Dendritic cell treated with granulocyte-macrophage colony-stimulating factor and Interleukin-4, amounts not matched to agents 40 ng/mL and 50 ng/mL, for 4 days (primary cell): ENCODE measurements at regions of chr12 and their contacts with region 1.

Region 1: GRCh38 chr12:98606357-98606988 is 13.0 kb downstream of the SLC25A3 start:
- H3K4me3 Mint-ChIP-seq: peak overlapping the region; percentile 76
- H3K27ac Mint-ChIP-seq: peak overlapping the region; percentile 94
- H3K4me1 Mint-ChIP-seq: peaks cover 10% of the 10 kb centered on the region
- H3K27me3 Mint-ChIP-seq: no peaks in the 10 kb centered on the region

Region 2: GRCh38 chr12:98352218-98352811 is 254.2 kb before region 1 on chr12:
- intact Hi-C with region 1: no loop called
- H3K4me3 Mint-ChIP-seq: no peak overlapping the region
- H3K27ac Mint-ChIP-seq: no peak overlapping the region
- H3K4me1 Mint-ChIP-seq: no peaks in the 10 kb centered on the region
- H3K27me3 Mint-ChIP-seq: no peaks in the 10 kb centered on the region

Region 3: DNA sequence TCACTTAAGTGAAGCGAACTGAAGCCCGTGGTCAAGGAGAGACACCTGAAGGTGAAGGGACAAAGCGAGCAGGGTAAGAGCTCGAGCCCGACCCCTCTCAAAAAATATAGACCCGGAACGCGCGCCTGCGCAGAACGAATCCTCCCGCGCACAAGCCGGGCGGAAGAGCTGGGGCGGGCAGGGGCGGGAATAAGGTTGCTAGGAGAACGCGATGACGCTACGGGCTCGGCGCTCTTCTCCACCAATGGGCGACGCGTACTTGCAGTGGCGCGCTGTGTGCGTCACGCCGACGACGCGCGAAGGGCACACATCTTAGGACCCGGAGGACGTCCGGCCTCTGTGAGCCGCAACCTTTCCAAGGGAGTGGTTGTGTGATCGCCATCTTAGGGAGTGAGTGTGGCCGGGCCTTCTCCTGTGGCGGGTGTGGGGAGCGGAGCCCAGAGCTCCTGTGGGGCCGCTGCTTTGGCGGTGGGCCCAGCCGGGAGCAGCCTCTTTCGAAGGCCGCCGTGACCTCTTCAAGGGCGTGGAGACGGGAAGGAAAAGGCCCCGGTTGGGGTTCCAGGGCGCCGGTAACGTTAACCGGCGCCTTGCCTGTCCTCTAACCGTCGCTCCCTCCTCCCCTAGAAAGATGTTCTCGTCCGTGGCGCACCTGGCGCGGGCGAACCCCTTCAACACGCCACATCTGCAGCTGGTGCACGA is 13.0 kb before region 1 on chr12 and contains the start of gene SLC25A3:
- intact Hi-C with region 1: loop called (anchors 1 kb)
- H3K4me3 Mint-ChIP-seq: peak within 1 kb of the TSS; percentile 95
- H3K27ac Mint-ChIP-seq: peak within 1 kb of the TSS; percentile 92
- H3K4me1 Mint-ChIP-seq: peaks cover 23% of the 10 kb centered on the region
- H3K27me3 Mint-ChIP-seq: no peaks in the 10 kb centered on the region

Region 4: DNA sequence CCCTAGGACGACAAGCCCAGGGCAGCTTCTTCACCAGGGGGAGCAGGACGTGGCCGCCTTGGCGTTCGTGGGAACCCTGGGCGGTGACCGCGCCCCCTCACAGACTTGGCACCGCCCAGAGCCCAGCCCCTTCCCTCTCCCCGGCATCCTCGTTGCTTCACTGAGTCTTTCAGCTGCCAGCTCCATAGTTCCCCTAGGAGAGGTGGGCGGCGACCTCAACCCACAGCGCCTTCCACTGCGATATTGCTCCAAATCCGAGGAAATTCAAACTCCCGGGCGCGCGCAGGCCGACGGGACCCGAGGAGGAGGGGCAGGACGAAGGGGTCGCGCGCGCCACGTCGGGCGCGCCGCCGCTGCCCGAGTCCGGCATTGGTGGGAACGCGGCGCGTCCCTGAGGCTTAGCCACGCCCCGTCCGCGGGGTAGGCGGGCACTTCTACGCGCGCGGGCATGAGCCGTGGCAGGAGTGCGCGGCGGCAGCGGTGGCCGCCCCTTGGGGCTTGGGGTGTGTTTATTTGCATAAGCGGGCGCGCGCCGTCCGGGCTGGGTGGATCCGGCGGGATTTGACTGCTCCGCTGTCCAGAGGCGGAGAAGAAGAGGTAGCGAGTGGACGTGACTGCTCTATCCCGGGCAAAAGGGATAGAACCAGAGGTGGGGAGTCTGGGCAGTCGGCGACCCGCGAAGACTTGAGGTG is 38.4 kb after region 1 on chr12 and contains the starts of genes APAF1 and IKBIP:
- intact Hi-C with region 1: loop called (anchors 2 kb)
- H3K4me3 Mint-ChIP-seq: peak within 1 kb of the TSS; percentile 88
- H3K27ac Mint-ChIP-seq: peak within 1 kb of the TSS; percentile 90
- H3K4me1 Mint-ChIP-seq: peaks cover 30% of the 10 kb centered on the region
- H3K27me3 Mint-ChIP-seq: no peaks in the 10 kb centered on the region

Region 5: DNA sequence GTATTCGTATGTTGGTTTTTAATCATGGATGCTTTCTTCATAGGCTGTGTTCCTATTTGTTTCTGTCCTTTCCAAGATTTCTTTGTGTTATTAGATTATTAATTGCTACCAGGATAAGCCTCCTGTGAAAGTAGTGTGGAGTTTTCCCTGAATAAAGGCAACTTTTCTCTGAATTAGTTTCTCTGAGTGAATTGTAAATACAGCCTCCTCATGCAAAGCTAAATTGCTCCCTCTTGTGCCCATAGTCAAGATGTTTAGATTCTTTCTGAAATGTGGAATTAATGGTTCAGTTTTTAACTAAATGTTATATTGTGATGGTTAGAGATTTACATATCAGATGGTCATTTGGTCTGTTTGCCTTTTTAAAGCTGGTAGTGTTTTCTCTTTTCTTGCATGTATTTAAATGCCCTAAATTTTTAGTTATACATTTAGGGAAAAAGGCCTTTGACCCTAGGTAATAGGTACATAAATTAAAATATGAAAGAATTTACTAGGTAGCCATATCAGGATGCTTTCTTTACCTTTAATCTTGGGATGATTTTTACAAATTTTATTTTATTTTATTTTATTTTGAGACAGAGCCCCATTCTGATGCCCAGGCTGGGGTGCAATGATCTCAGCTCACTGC is 47.5 kb after region 1 on chr12:
- intact Hi-C with region 1: loop called (anchors 2 kb)
- H3K4me3 Mint-ChIP-seq: no peak overlapping the region
- H3K27ac Mint-ChIP-seq: no peak overlapping the region
- H3K4me1 Mint-ChIP-seq: peaks cover 15% of the 10 kb centered on the region
- H3K27me3 Mint-ChIP-seq: no peaks in the 10 kb centered on the region